AG04449 (cell line): ENCODE measurements at regions of chr1 and their contacts with region 1.

Region 1: DNA sequence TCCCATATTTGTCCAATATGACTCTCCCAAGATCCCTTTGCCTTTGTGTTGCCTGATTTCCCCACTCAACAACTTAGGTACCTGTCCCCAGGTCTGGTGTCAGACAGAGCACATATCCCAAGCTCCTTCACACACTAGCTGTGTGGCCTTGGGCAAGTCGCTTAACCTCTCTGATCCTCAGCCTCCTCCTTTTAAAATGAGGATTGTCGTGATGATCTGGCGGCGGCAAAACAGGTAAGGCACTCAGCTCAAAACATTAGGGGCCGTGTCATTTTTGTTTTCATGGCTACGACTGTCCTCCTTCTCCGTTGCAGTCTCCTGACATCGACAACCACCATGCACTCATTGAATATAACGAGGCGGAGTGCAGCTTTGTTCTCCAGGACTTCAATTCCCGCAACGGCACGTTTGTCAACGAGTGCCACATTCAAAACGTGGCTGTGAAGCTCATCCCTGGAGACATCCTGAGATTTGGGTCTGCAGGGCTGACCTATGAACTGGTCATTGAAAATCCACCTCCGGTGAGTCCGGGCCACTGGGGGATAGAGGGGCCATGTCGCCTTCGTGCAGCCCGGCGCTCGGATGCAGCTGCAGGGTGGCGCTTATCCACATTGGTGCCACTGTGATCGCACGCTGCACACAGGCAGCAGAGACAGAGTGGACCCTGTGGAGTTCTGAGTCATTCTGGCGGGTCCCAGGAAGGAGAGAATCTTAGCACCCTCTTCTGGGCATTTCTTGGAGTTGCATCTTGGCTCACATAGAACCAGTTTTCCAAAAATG is 25.2 kb downstream of the FHAD1 start:
- DNase-seq: peak; percentile 10
- H3K4me3 ChIP-seq: no peak overlapping the region
- CTCF ChIP-seq: peak; percentile 74

Region 2: GRCh38 chr1:15141935-15142539 is 130.2 kb before region 1 on chr1:
- CTCF ChIA-PET with region 1: interaction called, 16 read pairs
- POLR2A ChIA-PET with region 1: no interaction called
- DNase-seq: no peak
- H3K4me3 ChIP-seq: no peak overlapping the region
- CTCF ChIP-seq: no peak

Region 3: GRCh38 chr1:15258833-15259621 is 13.2 kb before region 1 on chr1:
- CTCF ChIA-PET with region 1: interaction called, 15 read pairs
- POLR2A ChIA-PET with region 1: no interaction called
- DNase-seq: no peak
- H3K4me3 ChIP-seq: no peak overlapping the region
- CTCF ChIP-seq: no peak

Region 4: GRCh38 chr1:15304701-15305467 is 32.7 kb after region 1 on chr1:
- CTCF ChIA-PET with region 1: interaction called, 13 read pairs
- POLR2A ChIA-PET with region 1: no interaction called
- DNase-seq: no peak
- H3K4me3 ChIP-seq: peak overlapping the region; percentile 16
- CTCF ChIP-seq: peak; percentile 56